Calu3 (cell line): ENCODE measurements at regions of chrX and their contacts with region 1.

Region 1: GRCh38 chrX:151753313-151754041 is 18.9 kb downstream of the CNGA2 start:
- DNase-seq: peak; percentile 70
- H3K4me3 Mint-ChIP-seq: peak overlapping the region; percentile 53
- H3K27ac Mint-ChIP-seq: peak overlapping the region; percentile 45
- H3K4me1 Mint-ChIP-seq: peaks cover 9% of the 10 kb centered on the region
- H3K27me3 Mint-ChIP-seq: peaks cover 75% of the 10 kb centered on the region
- CTCF ChIP-seq: peak; percentile 87

Region 2: DNA sequence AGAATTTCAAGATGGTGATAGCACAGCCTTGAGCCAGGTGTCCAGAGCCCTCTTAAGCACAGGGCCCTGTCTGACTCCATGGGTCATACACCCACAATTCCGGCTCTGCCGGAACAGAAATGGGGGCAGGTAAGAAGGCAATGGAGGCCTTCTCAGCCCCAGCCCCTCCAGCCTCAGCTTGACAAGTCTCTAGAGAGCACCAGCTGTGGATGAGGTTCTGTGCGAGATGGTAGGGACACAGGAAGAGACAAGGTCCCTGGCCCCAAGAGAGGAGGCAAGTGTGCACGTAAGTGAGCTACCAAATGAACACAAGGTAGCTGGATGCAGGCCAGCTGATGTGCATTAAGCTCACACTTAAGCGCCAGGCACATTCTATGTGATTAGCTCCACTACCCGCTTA is 60.7 kb before region 1 on chrX:
- CTCF ChIA-PET with region 1: no interaction called
- intact Hi-C with region 1: no loop called
- DNase-seq: no peak
- H3K4me3 Mint-ChIP-seq: no peak overlapping the region
- H3K27ac Mint-ChIP-seq: no peak overlapping the region
- H3K4me1 Mint-ChIP-seq: no peaks in the 10 kb centered on the region
- H3K27me3 Mint-ChIP-seq: peaks cover 19% of the 10 kb centered on the region
- CTCF ChIP-seq: no peak

Region 3: DNA sequence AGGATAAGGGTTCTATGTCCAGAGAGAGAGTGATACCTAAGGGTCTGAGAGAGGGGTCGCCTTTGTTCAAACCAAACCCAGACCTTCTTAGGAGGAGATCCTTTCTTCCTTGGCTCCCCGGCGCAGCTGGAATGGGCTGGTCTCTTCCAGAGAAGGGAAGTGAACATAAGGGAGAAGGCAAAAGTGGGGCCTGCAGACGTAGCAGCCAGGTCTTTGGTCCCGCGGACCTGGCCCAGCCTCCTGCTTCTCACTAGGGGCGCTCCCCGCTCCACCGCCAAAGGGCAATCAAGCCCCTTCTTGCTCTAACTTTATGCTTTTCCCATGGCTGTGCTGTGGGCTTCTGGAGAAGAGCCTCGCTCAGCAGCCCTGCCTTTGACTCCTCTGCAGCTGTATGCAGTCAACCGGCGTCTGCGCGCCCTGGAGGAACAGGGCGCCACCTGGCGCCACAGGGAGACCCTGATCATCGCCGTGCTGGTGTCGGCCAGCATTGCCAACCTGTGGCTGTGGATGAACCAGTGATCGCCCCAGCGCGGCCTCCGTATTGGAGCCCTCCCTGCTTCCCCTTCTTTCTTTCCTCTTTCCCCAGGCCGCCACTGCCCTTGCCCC is 31.1 kb before region 1 on chrX:
- CTCF ChIA-PET with region 1: no interaction called
- intact Hi-C with region 1: no loop called
- DNase-seq: peak; percentile 37
- H3K4me3 Mint-ChIP-seq: no peak overlapping the region
- H3K27ac Mint-ChIP-seq: no peak overlapping the region
- H3K4me1 Mint-ChIP-seq: no peaks in the 10 kb centered on the region
- H3K27me3 Mint-ChIP-seq: peaks cover 52% of the 10 kb centered on the region
- CTCF ChIP-seq: peak; percentile 27

Region 4: DNA sequence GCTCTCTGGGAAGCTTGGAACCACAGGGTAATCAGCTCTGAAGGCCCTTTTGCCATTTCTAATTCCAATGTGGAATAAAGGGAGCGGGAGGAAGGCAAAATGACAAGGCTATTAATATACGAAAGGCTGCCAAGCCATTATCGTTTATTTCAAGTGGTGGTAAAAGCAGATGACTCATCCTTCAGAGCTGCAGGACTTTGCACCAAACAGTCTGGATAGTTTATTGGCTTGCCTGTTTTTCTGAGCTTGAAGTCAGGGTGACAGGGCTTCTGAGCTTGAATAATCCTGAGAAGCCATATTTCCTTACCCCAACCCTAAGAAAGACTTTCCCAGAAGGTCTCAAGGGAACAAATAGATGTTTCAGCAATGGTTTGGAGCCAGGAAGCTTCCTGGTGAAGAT is 228.7 kb after region 1 on chrX:
- CTCF ChIA-PET with region 1: no interaction called
- intact Hi-C with region 1: loop called (anchors 5 kb)
- DNase-seq: peak; percentile 20
- H3K4me3 Mint-ChIP-seq: no peak overlapping the region
- H3K27ac Mint-ChIP-seq: no peak overlapping the region
- H3K4me1 Mint-ChIP-seq: peaks cover 32% of the 10 kb centered on the region
- H3K27me3 Mint-ChIP-seq: no peaks in the 10 kb centered on the region
- CTCF ChIP-seq: no peak

Region 5: GRCh38 chrX:152131525-152131924 is 378.0 kb after region 1 on chrX:
- CTCF ChIA-PET with region 1: no interaction called
- intact Hi-C with region 1: loop called (anchors 5 kb)
- DNase-seq: no peak
- H3K4me3 Mint-ChIP-seq: no peak overlapping the region
- H3K27ac Mint-ChIP-seq: no peak overlapping the region
- H3K4me1 Mint-ChIP-seq: peaks cover 12% of the 10 kb centered on the region
- H3K27me3 Mint-ChIP-seq: peaks cover 11% of the 10 kb centered on the region
- CTCF ChIP-seq: no peak

Region 6: DNA sequence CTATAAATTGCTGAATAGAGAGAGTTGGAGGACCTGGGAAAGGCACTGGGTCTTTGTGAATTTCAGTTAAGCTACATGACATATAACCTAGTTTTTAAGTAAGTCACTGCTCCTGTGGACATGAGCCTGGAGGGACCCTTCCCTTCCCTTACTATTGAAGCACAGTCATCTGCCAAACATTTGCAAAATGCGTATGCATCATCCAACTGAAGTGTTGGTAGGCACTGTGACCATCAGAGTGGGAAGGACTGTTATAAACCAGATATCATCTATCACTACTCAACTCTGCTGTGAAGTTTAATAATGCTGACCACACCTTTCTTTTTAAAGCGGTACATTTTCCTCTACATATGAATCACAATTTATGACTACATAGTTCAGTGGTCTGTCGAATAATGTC is 692.4 kb after region 1 on chrX:
- CTCF ChIA-PET with region 1: no interaction called
- intact Hi-C with region 1: loop called (anchors 10 kb)
- DNase-seq: no peak
- H3K4me3 Mint-ChIP-seq: no peak overlapping the region
- H3K27ac Mint-ChIP-seq: no peak overlapping the region
- H3K4me1 Mint-ChIP-seq: no peaks in the 10 kb centered on the region
- H3K27me3 Mint-ChIP-seq: no peaks in the 10 kb centered on the region
- CTCF ChIP-seq: no peak

Region 7: GRCh38 chrX:152821145-152821765 is 1067.8 kb after region 1 on chrX:
- CTCF ChIA-PET with region 1: interaction called, 4 read pairs
- intact Hi-C with region 1: loop called (anchors 5 kb)
- DNase-seq: peak; percentile 69
- H3K4me3 Mint-ChIP-seq: no peak overlapping the region
- H3K27ac Mint-ChIP-seq: no peak overlapping the region
- H3K4me1 Mint-ChIP-seq: no peaks in the 10 kb centered on the region
- H3K27me3 Mint-ChIP-seq: peaks cover 6% of the 10 kb centered on the region
- CTCF ChIP-seq: peak; percentile 61